Activated T-helper 1 cell treated with anti-CD3 and anti-CD28 coated beads, Interleukin-12 subunit alpha, Interleukin-12 subunit beta, Interleukin-2, Interleukin-4 antibody, amounts not matched to agents 30 ng/mL and 10 ng/mL and 1 ng/mL, durations not matched to agents 14 hours and 24 hours and 36 hours (primary cell): ENCODE measurements at regions of chr12 and their contacts with region 1.

Region 1: DNA sequence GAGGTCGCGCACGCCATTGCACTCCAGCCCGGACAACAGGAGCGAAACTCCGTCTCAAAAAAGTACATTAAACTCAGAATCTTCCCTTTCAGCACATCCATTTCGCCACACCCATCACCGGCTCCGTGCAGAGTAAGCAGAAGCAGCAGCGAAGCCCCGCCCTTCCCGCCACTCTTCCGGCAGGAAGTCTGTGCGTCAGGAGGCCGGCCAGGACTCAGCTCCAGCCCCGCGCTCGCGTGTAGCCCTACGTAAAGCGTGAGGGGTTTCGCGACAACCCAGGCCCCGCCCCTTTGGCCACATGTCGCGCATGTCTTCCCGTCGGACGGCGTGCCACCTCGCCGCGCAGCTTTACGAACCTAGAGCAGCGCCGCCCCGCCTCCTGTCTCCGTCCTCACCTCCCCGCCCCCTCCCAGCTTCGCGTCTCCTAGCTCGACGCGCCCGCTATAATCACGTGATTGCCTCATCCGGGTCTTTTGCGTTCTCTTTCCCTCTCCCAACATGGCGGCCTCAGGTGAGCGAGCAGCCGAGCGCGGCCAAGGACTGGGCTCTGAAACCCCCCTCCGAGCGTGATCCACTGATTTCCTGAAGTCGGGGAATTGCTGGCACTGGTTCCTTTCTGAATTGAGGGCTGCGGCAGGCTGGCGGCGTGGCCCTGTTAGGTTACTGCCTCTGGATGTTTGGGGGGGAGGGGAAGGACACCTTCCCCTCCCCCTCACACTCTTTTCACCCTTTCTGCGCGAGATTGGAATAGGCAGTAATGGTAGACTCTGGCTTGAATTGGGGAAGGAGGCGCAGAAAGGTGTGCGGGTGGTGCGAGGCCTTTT is at the start of gene EIF4B:
- DNase-seq: peak; percentile 99
- H3K4me3 Mint-ChIP-seq: peak within 1 kb of the TSS; percentile 95
- H3K27ac Mint-ChIP-seq: peak within 1 kb of the TSS; percentile 97
- H3K4me1 Mint-ChIP-seq: peaks cover 35% of the 10 kb centered on the region
- H3K27me3 Mint-ChIP-seq: peaks cover 4% of the 10 kb centered on the region
- total RNA-seq, gene EIF4B: 463 and 473 TPM in 2 replicates

Region 2: DNA sequence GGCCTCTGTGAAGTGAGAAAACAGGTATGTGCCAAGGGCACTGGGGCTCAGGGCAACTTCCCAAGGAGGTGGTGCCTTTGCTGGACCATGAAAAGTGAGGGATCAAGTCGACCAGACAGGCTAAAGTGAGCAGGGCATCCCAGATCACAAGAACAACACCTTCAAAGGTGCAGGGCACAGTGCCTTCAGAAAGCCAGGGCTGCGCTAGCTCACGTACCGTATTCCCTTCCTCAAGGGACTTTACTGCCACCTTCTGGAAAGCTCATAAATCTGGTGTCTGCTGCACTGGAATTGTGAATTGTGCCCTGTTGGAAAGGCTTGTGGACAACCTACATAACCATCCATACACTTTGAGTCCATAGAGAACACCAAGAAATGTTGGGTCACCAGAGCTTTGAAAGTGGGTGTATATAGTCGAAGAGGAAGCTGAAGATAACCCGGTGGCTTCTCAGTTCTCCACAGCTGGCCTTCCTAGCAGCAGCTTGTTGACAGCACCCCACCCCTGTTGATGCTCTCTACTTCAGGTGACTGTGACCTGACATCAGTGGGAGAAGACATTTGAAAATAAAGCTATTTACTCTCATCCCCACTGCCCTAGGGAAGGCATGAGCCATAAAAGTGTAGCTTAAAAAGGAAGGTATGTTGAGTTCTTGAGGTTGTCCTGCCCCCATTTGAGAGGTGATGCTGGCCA is 1182.2 kb before region 1 on chr12:
- intact Hi-C with region 1: loop called (anchors 10 kb)
- DNase-seq: no peak
- H3K4me3 Mint-ChIP-seq: no peak overlapping the region
- H3K27ac Mint-ChIP-seq: no peak overlapping the region
- H3K4me1 Mint-ChIP-seq: peaks cover 22% of the 10 kb centered on the region
- H3K27me3 Mint-ChIP-seq: peaks cover 33% of the 10 kb centered on the region

Region 3: DNA sequence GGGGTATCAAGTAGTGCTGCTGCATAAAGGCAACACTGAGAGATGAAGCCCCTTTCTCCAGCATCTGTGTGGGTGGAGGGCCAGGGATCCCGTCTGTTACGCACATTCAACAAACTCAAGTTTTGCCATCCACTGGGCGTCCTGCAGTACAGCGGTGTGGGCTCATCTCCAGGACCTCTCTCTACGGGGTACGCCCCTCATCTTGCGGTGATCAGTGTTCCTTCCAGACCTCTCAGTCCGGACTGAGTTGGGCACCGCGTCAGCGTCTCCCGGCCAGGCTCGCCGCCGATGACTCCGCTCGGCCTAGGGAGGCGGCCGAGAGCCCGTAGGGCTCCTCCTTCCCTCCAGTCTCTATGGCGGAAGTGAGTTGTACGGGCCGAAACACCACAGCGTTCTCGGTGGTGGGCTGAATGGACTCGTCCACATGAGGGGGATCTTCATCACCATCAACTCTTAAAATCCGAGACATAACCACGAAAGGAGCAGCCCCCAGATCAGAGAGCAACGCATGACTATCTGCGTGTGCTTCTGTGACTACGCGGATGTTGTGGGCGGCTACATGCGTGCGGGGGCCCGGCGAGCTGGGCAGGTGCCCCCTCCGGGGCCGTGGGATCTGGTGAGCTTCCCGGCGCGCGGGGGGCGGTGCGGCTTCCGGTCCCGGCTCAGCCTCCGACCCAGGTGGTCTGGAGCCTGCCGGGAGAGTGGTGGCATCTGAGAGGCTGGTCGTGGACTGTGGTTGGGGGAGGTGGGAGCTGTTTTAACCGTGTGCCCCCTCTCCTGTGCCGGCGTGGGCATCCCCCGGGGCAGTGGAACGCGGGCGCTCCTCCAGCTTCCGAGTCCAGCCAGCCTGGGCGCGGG is 936.6 kb before region 1 on chr12 and contains the start of gene ATG101:
- intact Hi-C with region 1: loop called (anchors 1 kb)
- DNase-seq: peak; percentile 84
- H3K4me3 Mint-ChIP-seq: peak within 1 kb of the TSS; percentile 96
- H3K27ac Mint-ChIP-seq: peak within 1 kb of the TSS; percentile 99
- H3K4me1 Mint-ChIP-seq: peaks cover 54% of the 10 kb centered on the region
- H3K27me3 Mint-ChIP-seq: peaks cover 2% of the 10 kb centered on the region
- total RNA-seq, gene ATG101: 56.2 and 63.3 TPM in 2 replicates

Region 4: DNA sequence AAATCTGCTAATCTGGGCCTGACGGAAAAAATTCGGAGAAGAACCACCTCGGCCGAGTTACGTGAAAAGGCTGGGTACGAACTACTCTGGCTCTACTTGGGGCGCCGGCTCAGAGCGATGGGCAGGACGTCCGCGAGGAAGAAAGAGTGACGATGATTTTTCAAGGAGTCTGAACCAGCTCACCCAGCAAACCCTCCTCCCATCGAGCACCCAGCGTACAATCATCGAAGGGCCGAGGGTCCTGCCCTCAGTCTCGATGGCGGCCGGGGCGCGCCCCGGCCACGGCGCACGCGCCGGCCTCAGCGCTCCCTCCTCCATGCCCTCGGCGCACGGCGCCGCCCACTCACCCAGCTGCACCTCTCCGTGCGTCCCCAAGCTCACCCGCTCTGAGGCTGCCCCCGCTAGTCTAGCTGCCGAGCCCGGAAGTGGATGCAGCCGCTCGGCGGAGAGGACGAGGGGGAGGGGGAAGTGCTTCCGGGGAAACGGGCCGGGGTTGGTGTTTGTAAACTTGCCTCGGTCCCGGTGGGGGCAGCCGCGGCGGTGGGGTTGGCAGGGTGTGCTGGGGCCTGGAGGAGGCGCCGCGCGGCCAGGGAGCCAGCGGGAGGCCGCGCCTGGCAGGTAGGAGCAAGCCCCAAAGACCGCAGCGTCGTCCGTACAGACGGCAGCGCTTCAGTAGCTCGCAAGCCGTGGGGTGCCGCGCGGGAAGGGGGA is 174.2 kb after region 1 on chr12 and contains the starts of genes CSAD and ZNF740:
- intact Hi-C with region 1: loop called (anchors 1 kb)
- DNase-seq: peak; percentile 97
- H3K4me3 Mint-ChIP-seq: peak within 1 kb of the TSS; percentile 88
- H3K27ac Mint-ChIP-seq: peak within 1 kb of the TSS; percentile 99
- H3K4me1 Mint-ChIP-seq: peaks cover 52% of the 10 kb centered on the region
- H3K27me3 Mint-ChIP-seq: no peaks in the 10 kb centered on the region
- total RNA-seq, gene CSAD: 21.7 and 22.6 TPM in 2 replicates
- total RNA-seq, gene ZNF740: 48.1 and 52.8 TPM in 2 replicates

Region 5: GRCh38 chr12:53379389-53380103 is 373.3 kb after region 1 on chr12:
- intact Hi-C with region 1: loop called (anchors 1 kb)
- DNase-seq: peak; percentile 99
- H3K4me3 Mint-ChIP-seq: no peak overlapping the region
- H3K27ac Mint-ChIP-seq: no peak overlapping the region
- H3K4me1 Mint-ChIP-seq: peaks cover 37% of the 10 kb centered on the region
- H3K27me3 Mint-ChIP-seq: no peaks in the 10 kb centered on the region

Region 6: DNA sequence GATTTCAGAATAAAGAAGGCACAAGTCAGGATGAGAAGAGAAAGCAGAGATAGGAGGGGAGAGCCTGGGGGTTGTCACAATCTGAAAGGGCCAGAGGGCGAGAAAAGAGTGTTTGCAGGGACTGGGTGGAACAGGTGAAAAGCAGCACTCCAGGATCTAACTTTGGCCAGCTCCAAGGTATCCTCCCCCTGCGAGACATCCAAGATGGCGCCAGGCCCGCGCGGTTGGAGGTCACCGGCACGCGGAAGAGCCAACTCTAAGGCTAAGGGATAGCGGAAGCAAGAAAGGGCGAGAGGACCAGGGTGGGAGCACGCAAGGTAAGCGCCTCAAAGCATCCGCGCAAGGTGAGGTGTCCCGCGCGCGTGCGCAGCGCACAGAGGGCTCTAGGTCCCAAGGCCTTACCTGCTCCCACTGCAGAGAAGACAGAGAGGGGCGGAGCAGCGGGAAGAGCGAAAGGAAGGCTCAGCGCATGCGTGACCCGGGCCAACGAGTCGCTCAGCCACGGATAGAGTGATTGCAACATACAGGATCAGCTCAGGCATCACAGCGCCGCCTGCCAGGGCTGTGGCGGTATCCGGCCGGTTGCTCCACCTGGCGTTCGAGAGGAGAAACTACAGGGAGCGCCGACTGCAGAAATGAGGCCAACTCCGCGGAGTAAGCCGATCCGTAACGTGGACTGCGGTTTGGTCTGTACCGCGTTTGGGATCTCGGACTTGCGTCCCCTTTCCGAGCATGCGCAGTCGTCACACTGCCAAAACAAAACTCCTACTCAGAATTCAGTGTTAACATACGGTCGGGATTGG is 669.7 kb after region 1 on chr12 and contains the start of gene ATP5MC2:
- intact Hi-C with region 1: loop called (anchors 2 kb)
- DNase-seq: peak; percentile 95
- H3K4me3 Mint-ChIP-seq: peak within 1 kb of the TSS; percentile 87
- H3K27ac Mint-ChIP-seq: peak within 1 kb of the TSS; percentile 95
- H3K4me1 Mint-ChIP-seq: peaks cover 22% of the 10 kb centered on the region
- H3K27me3 Mint-ChIP-seq: peaks cover 27% of the 10 kb centered on the region
- total RNA-seq, gene ATP5MC2: 363 and 383 TPM in 2 replicates